ENCODE measurements at regions of chr6 and their contacts with region 1.

Region 1: DNA sequence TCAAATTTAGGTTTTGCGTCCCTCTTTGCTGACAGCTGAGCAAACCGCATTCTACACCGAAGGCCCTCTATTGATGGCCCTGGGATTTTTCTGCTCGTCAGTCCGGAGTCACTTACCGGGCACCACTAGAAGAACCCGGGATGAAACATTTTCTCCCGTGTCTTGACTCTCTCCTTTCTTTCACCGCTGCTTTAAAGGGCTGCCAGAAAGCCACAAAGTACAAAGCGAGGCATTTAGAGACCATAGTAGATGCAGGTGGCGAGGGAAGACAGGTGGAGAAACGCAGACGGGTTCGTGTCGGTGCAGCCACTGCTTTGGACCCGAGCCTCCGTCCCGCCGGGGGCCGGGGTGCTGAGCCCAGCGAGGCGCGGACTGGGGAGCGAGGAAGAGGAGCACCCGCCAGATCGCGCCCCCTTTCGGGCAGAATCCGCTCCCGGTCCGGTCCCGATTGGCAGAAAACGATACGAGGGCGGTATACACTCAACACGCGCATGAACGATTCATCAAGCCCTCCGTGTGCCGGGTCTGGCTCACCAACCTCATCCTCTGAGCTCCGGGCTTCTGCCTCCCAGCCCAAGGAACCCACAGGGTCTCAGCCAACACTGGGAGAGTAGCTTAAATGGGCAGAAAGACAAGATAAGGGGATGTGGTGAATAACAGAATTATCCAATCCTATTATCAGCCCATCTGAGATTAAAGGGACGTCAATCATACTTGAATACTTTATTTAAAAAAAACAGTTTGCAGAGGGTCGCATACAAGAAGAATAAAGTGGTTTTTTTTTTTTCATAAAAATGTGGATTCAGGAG is 84.9 kb downstream of the TRIM27 start:
- DNase-seq: peak; percentile 91
- H3K4me3 Mint-ChIP-seq: peak overlapping the region; percentile 86
- H3K27ac Mint-ChIP-seq: peak overlapping the region; percentile 85
- H3K4me1 Mint-ChIP-seq: peaks cover 14% of the 10 kb centered on the region
- H3K27me3 Mint-ChIP-seq: peaks cover 16% of the 10 kb centered on the region

Region 2: DNA sequence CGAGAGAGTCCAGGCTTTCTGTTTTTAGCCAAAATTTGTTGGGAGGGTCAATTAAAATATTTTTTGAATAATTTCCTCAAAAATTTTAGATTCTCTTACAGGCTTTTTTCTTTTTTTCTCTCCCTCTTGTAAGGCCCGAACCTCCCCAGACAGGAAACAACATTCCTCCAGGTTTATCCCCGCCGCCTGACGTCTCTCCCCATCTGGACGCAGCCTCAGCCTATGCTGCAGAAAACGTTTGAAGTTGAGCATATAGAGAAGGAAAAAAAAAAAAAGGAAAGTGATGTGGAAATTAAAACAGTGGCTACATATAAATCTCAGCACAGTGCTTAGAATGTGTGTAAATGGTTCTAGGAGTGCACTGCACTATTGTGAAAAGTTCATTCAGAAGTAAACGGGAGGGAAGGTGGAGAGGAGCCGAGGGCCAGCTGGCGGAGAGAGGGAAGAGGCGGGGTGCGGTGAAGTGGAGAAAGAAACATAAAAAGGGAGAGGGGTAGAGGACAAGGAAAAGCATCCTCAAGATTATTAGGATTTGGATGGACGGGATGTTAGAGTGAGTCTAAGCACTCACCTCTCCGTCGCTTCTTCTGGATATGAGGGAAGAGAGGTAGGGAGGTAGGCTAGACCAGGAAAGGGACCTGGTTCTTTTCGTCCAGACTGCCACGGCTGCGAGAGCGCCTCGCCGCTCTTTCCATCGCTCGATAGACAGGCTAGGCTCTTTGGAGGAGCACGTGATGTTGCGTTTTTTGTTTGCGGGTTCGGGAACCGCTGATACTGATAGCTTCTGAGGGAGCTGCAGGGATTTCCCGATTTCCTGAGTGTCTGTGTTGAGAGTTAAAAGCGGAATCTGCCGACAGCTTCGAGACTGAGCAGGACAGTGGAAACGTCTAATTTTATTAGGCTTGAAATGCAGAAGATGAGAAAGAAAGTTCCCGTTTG is 13.8 kb before region 1 on chr6:
- CTCF ChIA-PET with region 1: interaction called, 16 read pairs
- POLR2A ChIA-PET with region 1: no interaction called
- intact Hi-C with region 1: no loop called
- DNase-seq: no peak
- H3K4me3 Mint-ChIP-seq: no peak overlapping the region
- H3K27ac Mint-ChIP-seq: no peak overlapping the region
- H3K4me1 Mint-ChIP-seq: peaks cover 10% of the 10 kb centered on the region
- H3K27me3 Mint-ChIP-seq: peaks cover 64% of the 10 kb centered on the region

Region 3: GRCh38 chr6:28880894-28881780 is 42.3 kb after region 1 on chr6:
- CTCF ChIA-PET with region 1: interaction called, 11 read pairs
- POLR2A ChIA-PET with region 1: no interaction called
- intact Hi-C with region 1: loop called (anchors 1 kb)
- DNase-seq: peak; percentile 78
- H3K4me3 Mint-ChIP-seq: peak overlapping the region; percentile 65
- H3K27ac Mint-ChIP-seq: peak overlapping the region; percentile 24
- H3K4me1 Mint-ChIP-seq: peaks cover 28% of the 10 kb centered on the region
- H3K27me3 Mint-ChIP-seq: peaks cover 14% of the 10 kb centered on the region

Region 4: GRCh38 chr6:28923318-28924102 is 84.7 kb after region 1 on chr6 and contains the start of gene TRIM27:
- CTCF ChIA-PET with region 1: interaction called, 24 read pairs
- POLR2A ChIA-PET with region 1: interaction called, 5 read pairs
- intact Hi-C with region 1: loop called (anchors 5 kb)
- DNase-seq: peak; percentile 87
- H3K4me3 Mint-ChIP-seq: peak within 1 kb of the TSS; percentile 94
- H3K27ac Mint-ChIP-seq: peak within 1 kb of the TSS; percentile 94
- H3K4me1 Mint-ChIP-seq: peaks cover 38% of the 10 kb centered on the region
- H3K27me3 Mint-ChIP-seq: no peaks in the 10 kb centered on the region
- total RNA-seq, gene TRIM27: 49.7 to 54.6 TPM

Region 5: GRCh38 chr6:29011276-29011734 is 172.5 kb after region 1 on chr6:
- CTCF ChIA-PET with region 1: interaction called, 106 read pairs
- POLR2A ChIA-PET with region 1: interaction called, 10 read pairs
- intact Hi-C with region 1: loop called (anchors 1 kb)
- DNase-seq: peak; percentile 62
- H3K4me3 Mint-ChIP-seq: peak overlapping the region; percentile 93
- H3K27ac Mint-ChIP-seq: no peak overlapping the region
- H3K4me1 Mint-ChIP-seq: peaks cover 13% of the 10 kb centered on the region
- H3K27me3 Mint-ChIP-seq: peaks cover 13% of the 10 kb centered on the region